ENCODE measurements at regions of chr3 and their contacts with region 1.

Region 1: GRCh38 chr3:67048067-67048714 is 50.1 kb downstream of the KBTBD8 start:
- DNase-seq: peak; percentile 86
- H3K4me3 ChIP-seq: peak overlapping the region; percentile 58
- H3K27ac ChIP-seq: peak overlapping the region; percentile 100
- H3K4me1 ChIP-seq: peaks cover 54% of the 10 kb centered on the region
- CTCF ChIP-seq: no peak

Region 2: GRCh38 chr3:66500576-66501482 is 547.4 kb before region 1 on chr3 and contains the start of gene LRIG1:
- CTCF ChIA-PET with region 1: no interaction called
- POLR2A ChIA-PET with region 1: interaction called, 3 read pairs
- intact Hi-C with region 1: loop called (anchors 5 kb)
- DNase-seq: peak; percentile 99
- H3K4me3 ChIP-seq: peak within 1 kb of the TSS; percentile 98
- H3K27ac ChIP-seq: peak within 1 kb of the TSS; percentile 58
- H3K4me1 ChIP-seq: peaks cover 39% of the 10 kb centered on the region
- CTCF ChIP-seq: no peak
- total RNA-seq, gene LRIG1: 74.5 and 115 TPM in 2 replicates

Region 3: DNA sequence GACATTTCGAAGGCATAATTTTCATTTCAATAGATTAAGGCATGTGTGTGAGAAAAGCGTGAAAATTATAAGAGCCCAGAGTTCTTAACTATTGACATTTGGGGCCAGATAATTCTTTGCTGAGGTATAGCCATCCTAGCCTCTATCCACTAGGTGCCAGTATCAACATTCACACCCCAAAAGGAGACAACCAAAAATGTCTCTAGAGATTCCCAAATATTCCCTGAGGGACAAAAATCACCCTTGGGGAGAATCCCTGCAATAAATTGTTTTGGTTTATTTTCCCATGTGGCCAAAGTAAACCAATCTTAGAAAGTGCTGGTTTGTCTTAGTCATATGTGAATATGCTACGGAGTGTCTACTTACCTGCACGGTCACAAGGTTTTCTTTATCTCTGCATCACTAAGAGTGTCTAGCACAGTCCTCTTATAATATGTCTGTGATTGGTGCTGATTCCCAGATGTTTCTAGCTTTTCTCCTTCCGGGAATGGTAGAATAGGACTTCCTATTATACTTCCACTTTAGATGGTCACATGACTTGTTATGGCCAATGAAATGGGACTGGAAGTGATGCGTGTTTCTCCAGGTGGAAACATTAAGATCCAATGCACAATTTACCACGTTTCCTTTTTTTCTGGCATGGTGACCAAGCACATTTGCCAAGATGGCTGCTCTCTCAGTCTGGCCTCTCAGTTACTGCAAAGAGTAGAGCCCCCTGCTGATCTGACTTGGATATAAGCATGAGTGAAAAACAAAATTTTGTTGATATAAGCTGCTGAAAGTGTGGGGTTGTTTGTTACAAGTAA is 58.1 kb before region 1 on chr3:
- CTCF ChIA-PET with region 1: interaction called, 4 read pairs
- POLR2A ChIA-PET with region 1: interaction called, 15 read pairs
- intact Hi-C with region 1: no loop called
- DNase-seq: peak; percentile 71
- H3K4me3 ChIP-seq: peak overlapping the region; percentile 61
- H3K27ac ChIP-seq: peak overlapping the region; percentile 52
- H3K4me1 ChIP-seq: peaks cover 10% of the 10 kb centered on the region
- CTCF ChIP-seq: peak; percentile 88

Region 4: GRCh38 chr3:67006460-67006859 is 41.7 kb before region 1 on chr3:
- CTCF ChIA-PET with region 1: no interaction called
- POLR2A ChIA-PET with region 1: interaction called, 36 read pairs
- intact Hi-C with region 1: no loop called
- DNase-seq: no peak
- H3K4me3 ChIP-seq: peak overlapping the region; percentile 4
- H3K27ac ChIP-seq: no peak overlapping the region
- H3K4me1 ChIP-seq: peaks cover 52% of the 10 kb centered on the region
- CTCF ChIP-seq: no peak

Region 5: DNA sequence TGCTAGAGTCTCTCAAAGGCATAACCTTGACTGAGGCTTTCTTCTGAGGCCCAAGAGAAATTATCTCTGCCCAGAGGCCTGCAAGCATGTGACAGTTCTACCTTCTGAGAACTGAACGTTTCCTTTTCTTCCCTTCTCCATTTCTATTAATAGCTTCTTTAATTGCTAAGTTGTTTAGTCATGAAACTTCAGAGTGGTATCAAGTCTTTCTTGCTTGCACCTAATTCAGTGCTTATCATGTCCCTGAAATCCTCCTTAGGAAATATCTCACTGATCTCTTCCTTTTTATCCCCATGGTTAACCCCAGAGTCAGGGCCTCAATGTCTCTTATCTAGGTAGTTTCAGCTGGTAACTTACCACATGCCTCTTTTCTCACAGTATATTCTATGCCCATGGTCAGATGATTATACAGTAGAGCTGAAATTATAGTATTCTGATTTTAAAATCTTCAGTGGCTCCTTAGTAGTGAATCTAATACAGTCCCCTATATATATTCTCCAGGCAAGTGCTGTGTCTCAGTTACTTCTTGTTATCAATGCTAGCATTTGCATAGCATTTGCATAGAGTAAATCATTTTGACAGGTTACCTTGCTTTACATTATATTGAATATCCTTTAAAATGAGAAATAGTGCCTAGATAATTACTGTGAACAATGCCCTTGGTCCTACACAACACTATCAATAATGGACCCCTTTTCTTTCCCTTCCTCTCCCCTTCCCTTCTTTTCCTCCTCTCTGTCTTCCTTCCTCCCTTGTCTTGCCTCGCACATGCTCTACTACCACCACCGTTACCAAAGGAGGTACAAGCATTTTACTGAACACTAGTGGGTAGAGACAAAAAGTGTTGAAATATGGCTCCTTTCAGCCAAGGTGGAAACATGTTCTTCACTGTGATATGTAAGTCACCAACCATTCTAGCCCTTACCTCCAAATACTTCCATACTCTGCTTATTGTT is 17.1 kb before region 1 on chr3:
- CTCF ChIA-PET with region 1: interaction called, 3 read pairs
- POLR2A ChIA-PET with region 1: interaction called, 65 read pairs
- intact Hi-C with region 1: no loop called
- DNase-seq: no peak
- H3K4me3 ChIP-seq: no peak overlapping the region
- H3K27ac ChIP-seq: no peak overlapping the region
- H3K4me1 ChIP-seq: peaks cover 19% of the 10 kb centered on the region
- CTCF ChIP-seq: no peak

Region 6: DNA sequence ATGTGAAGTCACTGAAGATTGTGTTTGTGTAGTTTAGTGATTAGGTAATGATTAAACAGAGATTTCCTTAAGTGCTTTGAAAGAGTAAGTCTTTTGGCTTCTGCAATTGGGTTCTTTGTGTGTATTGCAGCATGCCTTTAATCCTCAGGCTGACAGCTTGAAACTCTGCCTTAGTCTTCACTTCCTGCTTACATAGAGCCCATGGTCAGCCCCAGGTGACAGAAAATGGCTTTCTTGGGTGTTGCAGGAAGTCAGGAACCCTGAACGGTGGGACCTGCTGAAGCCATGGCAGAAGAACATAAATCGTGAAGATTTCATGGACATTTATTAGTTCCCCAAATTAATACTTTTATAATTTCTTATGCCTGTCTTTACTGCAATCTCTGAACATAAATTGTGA is 11.3 kb after region 1 on chr3:
- CTCF ChIA-PET with region 1: interaction called, 5 read pairs
- POLR2A ChIA-PET with region 1: interaction called, 12 read pairs
- intact Hi-C with region 1: no loop called
- DNase-seq: no peak
- H3K4me3 ChIP-seq: no peak overlapping the region
- H3K27ac ChIP-seq: no peak overlapping the region
- H3K4me1 ChIP-seq: peaks cover 11% of the 10 kb centered on the region
- CTCF ChIP-seq: no peak

Region 7: GRCh38 chr3:67685499-67685898 is 637.3 kb after region 1 on chr3:
- CTCF ChIA-PET with region 1: no interaction called
- POLR2A ChIA-PET with region 1: no interaction called
- intact Hi-C with region 1: loop called (anchors 5 kb)
- DNase-seq: peak; percentile 88
- H3K4me3 ChIP-seq: peak overlapping the region; percentile 51
- H3K27ac ChIP-seq: peak overlapping the region; percentile 96
- H3K4me1 ChIP-seq: peaks cover 57% of the 10 kb centered on the region
- CTCF ChIP-seq: no peak

Measured in OCI-LY7 (cell line).